PC-9 (cell line): ENCODE measurements at regions of chr2 and their contacts with region 1.

Region 1: GRCh38 chr2:37318401-37318800 is 6.2 kb downstream of the PRKD3 start:
- DNase-seq: no peak
- H3K4me3 ChIP-seq: no peak overlapping the region
- H3K27ac ChIP-seq: no peak overlapping the region
- H3K4me1 ChIP-seq: peaks cover 14% of the 10 kb centered on the region
- H3K27me3 ChIP-seq: no peaks in the 10 kb centered on the region
- CTCF ChIP-seq: no peak

Region 2: GRCh38 chr2:37335604-37336003 is 17.2 kb after region 1 on chr2:
- CTCF ChIA-PET with region 1: no interaction called
- POLR2A ChIA-PET with region 1: interaction called, 10 read pairs
- intact Hi-C with region 1: no loop called
- DNase-seq: no peak
- H3K4me3 ChIP-seq: no peak overlapping the region
- H3K27ac ChIP-seq: no peak overlapping the region
- H3K4me1 ChIP-seq: no peaks in the 10 kb centered on the region
- H3K27me3 ChIP-seq: no peaks in the 10 kb centered on the region
- CTCF ChIP-seq: no peak